Activated naive CD4-positive, alpha-beta T cell treated with anti-CD3 and anti-CD28 coated beads for 36 hours (primary cell): ENCODE measurements at regions of chr11 and their contacts with region 1.

Region 1: DNA sequence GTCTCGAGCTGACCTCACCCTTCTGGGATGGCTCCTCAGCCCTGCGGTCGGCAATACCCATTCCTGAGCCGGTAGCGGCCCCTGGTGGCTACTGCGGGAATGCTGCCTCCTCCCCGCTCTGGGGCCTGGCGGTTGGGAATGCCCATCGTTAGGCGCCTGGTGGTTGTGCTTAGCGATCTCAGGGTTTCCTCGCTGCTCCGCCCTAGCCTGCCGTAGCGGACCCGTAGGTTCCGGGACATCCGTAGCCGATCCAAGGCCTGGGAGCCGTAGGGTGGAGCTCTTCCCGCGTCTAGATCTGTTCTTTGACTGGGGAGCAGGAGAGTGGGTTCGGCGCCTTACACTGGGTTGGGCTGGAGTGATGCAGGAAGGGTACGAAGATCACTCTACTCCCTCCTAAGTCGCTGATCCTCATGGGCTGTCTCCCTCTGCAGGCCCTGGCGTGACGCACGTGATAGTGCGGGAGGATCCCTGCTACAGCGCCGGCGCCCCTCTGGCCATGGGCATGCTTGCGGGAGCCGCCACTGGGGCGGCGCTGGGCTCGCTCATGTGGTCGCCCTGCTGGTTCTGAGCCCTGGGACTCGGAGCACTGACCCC is 14.8 kb downstream of the PLEKHB1 start:
- DNase-seq: peak; percentile 93
- H3K4me3 Mint-ChIP-seq: peak overlapping the region; percentile 45
- H3K27ac Mint-ChIP-seq: no peak overlapping the region
- H3K4me1 Mint-ChIP-seq: peaks cover 6% of the 10 kb centered on the region
- H3K27me3 Mint-ChIP-seq: no peaks in the 10 kb centered on the region

Region 2: DNA sequence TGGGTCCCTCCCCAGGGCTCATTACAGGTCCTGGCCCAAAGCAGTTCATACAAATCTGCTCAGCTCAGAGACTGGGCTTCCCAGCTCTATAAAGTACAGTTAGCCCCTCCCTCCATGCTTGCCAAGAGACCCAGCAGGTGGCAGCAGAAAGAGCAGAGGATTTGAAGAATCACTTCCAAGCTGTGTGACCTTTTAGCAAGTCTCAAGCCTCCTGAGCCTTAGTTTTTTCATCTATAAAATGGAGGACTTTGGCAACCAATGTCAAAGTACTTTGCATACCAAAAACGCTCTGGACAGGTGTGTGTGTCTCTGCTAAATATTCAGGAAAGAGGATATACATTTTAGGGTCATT is 258.3 kb before region 1 on chr11:
- CTCF ChIA-PET with region 1: interaction called, 10 read pairs
- intact Hi-C with region 1: loop called (anchors 1 kb)
- DNase-seq: peak; percentile 57
- H3K4me3 Mint-ChIP-seq: no peak overlapping the region
- H3K27ac Mint-ChIP-seq: no peak overlapping the region
- H3K4me1 Mint-ChIP-seq: no peaks in the 10 kb centered on the region
- H3K27me3 Mint-ChIP-seq: no peaks in the 10 kb centered on the region

Region 3: DNA sequence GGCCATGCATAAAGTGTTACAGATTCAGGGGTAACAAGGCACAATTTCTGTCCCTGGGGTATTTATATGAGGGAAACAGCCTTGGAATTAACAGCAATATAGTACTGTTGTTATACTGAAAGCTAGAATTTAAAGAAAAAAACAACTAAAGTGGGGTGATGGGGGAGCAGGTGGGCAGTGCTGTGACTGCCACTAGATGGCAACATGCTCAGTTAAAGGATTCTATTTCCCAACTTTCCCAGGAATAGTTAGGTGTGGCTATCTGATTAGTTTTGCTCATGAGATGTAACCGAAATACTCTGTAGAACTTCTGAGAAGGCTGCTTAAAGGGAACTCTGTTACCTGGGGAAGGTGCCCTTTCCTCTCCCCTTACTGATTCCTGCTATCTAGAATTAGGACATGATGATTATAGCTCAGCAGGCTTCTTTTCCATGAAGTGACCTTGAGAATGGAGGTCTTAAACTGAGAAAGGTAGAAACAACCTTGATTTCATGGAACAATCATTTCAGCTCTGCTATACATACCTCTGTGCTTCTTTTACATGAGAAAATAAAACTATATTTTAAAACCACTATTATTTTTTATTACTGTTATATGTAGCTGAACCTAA is 182.3 kb before region 1 on chr11:
- CTCF ChIA-PET with region 1: interaction called, 19 read pairs
- intact Hi-C with region 1: no loop called
- DNase-seq: no peak
- H3K4me3 Mint-ChIP-seq: no peak overlapping the region
- H3K27ac Mint-ChIP-seq: no peak overlapping the region
- H3K4me1 Mint-ChIP-seq: no peaks in the 10 kb centered on the region
- H3K27me3 Mint-ChIP-seq: no peaks in the 10 kb centered on the region

Region 4: GRCh38 chr11:73551677-73552076 is 109.5 kb before region 1 on chr11:
- CTCF ChIA-PET with region 1: no interaction called
- intact Hi-C with region 1: no loop called
- DNase-seq: no peak
- H3K4me3 Mint-ChIP-seq: no peak overlapping the region
- H3K27ac Mint-ChIP-seq: no peak overlapping the region
- H3K4me1 Mint-ChIP-seq: peaks cover 21% of the 10 kb centered on the region
- H3K27me3 Mint-ChIP-seq: no peaks in the 10 kb centered on the region

Region 5: GRCh38 chr11:73647459-73648100 is 13.6 kb before region 1 on chr11:
- CTCF ChIA-PET with region 1: interaction called, 48 read pairs
- intact Hi-C with region 1: no loop called
- DNase-seq: peak; percentile 96
- H3K4me3 Mint-ChIP-seq: peak overlapping the region; percentile 80
- H3K27ac Mint-ChIP-seq: peak overlapping the region; percentile 63
- H3K4me1 Mint-ChIP-seq: peaks cover 18% of the 10 kb centered on the region
- H3K27me3 Mint-ChIP-seq: no peaks in the 10 kb centered on the region

Region 6: GRCh38 chr11:73779084-73779902 is 118.2 kb after region 1 on chr11:
- CTCF ChIA-PET with region 1: no interaction called
- intact Hi-C with region 1: no loop called
- DNase-seq: peak; percentile 99
- H3K4me3 Mint-ChIP-seq: peak overlapping the region; percentile 85
- H3K27ac Mint-ChIP-seq: peak overlapping the region; percentile 98
- H3K4me1 Mint-ChIP-seq: peaks cover 14% of the 10 kb centered on the region
- H3K27me3 Mint-ChIP-seq: no peaks in the 10 kb centered on the region